Vagina (tissue), 2 donors: ENCODE measurements at regions of chr6 and their contacts with region 1.

Region 1: GRCh38 chr6:95959261-95959660 is 56.5 kb upstream of the FUT9 start:
- DNase-seq: no peak
- H3K4me3 ChIP-seq: no peak overlapping the region
- H3K27ac ChIP-seq: no peak overlapping the region
- H3K4me1 ChIP-seq: no peaks in the 10 kb centered on the region
- H3K27me3 ChIP-seq: no peaks in the 10 kb centered on the region
- CTCF ChIP-seq: no peak
- POLR2A ChIP-seq: no peak

Region 2: DNA sequence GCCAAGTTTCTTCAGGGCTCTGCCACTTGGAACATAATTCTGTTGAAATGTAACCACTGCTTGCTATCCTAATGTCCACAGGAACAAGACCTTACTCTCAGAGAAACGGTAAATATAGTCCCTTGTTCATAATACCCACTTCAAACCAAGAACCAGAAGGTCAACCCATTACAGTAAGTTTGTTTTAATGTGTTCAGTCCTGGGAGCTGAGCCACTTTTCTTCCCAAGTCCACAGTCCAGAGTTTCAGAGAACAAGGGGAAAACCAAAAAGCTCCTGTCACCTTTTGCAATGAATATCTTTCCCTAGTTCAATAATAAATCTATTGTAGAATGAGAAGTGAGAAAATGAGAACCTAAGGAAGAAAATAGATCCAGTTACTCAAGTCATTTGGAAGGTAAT is 813.8 kb before region 1 on chr6:
- intact Hi-C with region 1: loop called (anchors 5 kb)
- DNase-seq: no peak
- H3K4me3 ChIP-seq: no peak overlapping the region
- H3K27ac ChIP-seq: no peak overlapping the region
- H3K4me1 ChIP-seq: no peaks in the 10 kb centered on the region
- H3K27me3 ChIP-seq: no peaks in the 10 kb centered on the region
- CTCF ChIP-seq: no peak
- POLR2A ChIP-seq: no peak